WTC11 (cell line): ENCODE measurements at regions of chr13 and their contacts with region 1.

Region 1: GRCh38 chr13:50123862-50124536 is 108.8 kb downstream of the KCNRG start:
- DNase-seq: peak; percentile 87
- ATAC-seq: peak; percentile 33
- H3K4me3 Mint-ChIP-seq: peak overlapping the region; percentile 78
- H3K27ac Mint-ChIP-seq: no peak overlapping the region
- H3K4me1 Mint-ChIP-seq: peaks cover 52% of the 10 kb centered on the region
- H3K27me3 Mint-ChIP-seq: peaks cover 80% of the 10 kb centered on the region
- CTCF ChIP-seq: no peak

Region 2: GRCh38 chr13:50081679-50082425 is 42.1 kb before region 1 on chr13:
- CTCF ChIA-PET with region 1: interaction called, 18 read pairs
- POLR2A ChIA-PET with region 1: interaction called, 19 read pairs
- DNase-seq: peak; percentile 99
- ATAC-seq: peak; percentile 87
- H3K4me3 Mint-ChIP-seq: peak overlapping the region; percentile 98
- H3K27ac Mint-ChIP-seq: peak overlapping the region; percentile 99
- H3K4me1 Mint-ChIP-seq: peaks cover 42% of the 10 kb centered on the region
- H3K27me3 Mint-ChIP-seq: peaks cover 9% of the 10 kb centered on the region; the same call in 1 of the 2 replicates
- CTCF ChIP-seq: no peak

Region 3: GRCh38 chr13:50494138-50494537 is 370.1 kb after region 1 on chr13:
- CTCF ChIA-PET with region 1: no interaction called
- POLR2A ChIA-PET with region 1: no interaction called
- DNase-seq: no peak
- ATAC-seq: no peak
- H3K4me3 Mint-ChIP-seq: no peak overlapping the region
- H3K27ac Mint-ChIP-seq: no peak overlapping the region
- H3K4me1 Mint-ChIP-seq: no peaks in the 10 kb centered on the region
- H3K27me3 Mint-ChIP-seq: no peaks in the 10 kb centered on the region
- CTCF ChIP-seq: no peak